Caco-2 (cell line): ENCODE measurements at regions of chr7 and their contacts with region 1.

Region 1: DNA sequence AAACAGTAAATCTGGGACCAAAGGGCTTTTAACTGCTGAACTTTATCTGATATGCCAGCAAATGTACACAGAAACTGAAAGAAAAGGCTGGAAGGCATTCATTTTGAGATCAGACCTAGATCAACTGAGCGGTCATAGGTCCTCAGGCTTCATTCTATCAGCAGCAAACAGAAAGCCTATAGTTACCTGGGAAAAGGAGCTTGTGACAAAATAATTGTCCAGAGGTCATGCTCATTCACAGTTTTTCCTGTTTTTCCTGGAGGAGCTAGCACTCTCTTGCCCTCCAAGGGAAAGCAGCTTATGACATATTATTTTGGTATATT is 320.2 kb downstream of the AHR start:
- DNase-seq: peak; percentile 66 to 80
- H3K4me3 ChIP-seq: peak overlapping the region; percentile 9; the same call in 1 of the 2 replicates
- H3K4me3 Mint-ChIP-seq: peak overlapping the region; percentile 67
- H3K27ac Mint-ChIP-seq: peak overlapping the region; percentile 83
- H3K4me1 ChIP-seq: peaks cover 35% of the 10 kb centered on the region
- H3K4me1 Mint-ChIP-seq: peaks cover 19% of the 10 kb centered on the region
- H3K27me3 ChIP-seq: no peaks in the 10 kb centered on the region
- H3K27me3 Mint-ChIP-seq: no peaks in the 10 kb centered on the region
- CTCF ChIP-seq: no peak

Region 2: GRCh38 chr7:17495655-17496394 is 122.8 kb before region 1 on chr7:
- CTCF ChIA-PET with region 1: no interaction called
- POLR2A ChIA-PET with region 1: no interaction called
- intact Hi-C with region 1: loop called (anchors 5 kb)
- DNase-seq: peak in 1 of 2 experiments; percentile 26
- H3K4me3 ChIP-seq: no peak overlapping the region
- H3K4me3 Mint-ChIP-seq: no peak overlapping the region
- H3K27ac Mint-ChIP-seq: peak overlapping the region; percentile 22
- H3K4me1 ChIP-seq: peaks cover 24% of the 10 kb centered on the region
- H3K4me1 Mint-ChIP-seq: peaks cover 11% of the 10 kb centered on the region
- H3K27me3 ChIP-seq: no peaks in the 10 kb centered on the region
- H3K27me3 Mint-ChIP-seq: no peaks in the 10 kb centered on the region
- CTCF ChIP-seq: peak in 1 of 2 experiments; percentile 0

Region 3: DNA sequence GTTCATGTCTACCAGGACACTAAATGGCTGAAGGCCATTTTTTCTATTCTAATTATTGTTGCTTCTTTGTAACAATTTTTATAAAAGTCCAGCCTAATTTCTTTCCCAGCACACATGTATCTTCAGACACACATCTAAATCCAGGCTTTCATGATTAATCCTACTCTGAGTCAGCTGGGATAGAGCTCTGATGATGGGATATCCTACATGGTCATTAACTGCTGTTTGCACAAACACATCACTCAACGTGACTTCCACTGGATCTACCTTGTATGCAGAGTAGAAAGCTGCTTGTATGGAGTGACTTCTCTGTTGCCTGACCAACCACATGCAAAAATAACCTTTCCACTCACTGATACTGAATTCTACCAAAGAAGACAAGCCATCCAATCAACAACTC is 59.2 kb before region 1 on chr7:
- CTCF ChIA-PET with region 1: no interaction called
- POLR2A ChIA-PET with region 1: no interaction called
- intact Hi-C with region 1: loop called (anchors 2 kb)
- DNase-seq: no peak
- H3K4me3 ChIP-seq: no peak overlapping the region
- H3K4me3 Mint-ChIP-seq: peak overlapping the region; percentile 6
- H3K27ac Mint-ChIP-seq: peak overlapping the region; percentile 67
- H3K4me1 ChIP-seq: peaks cover 23% of the 10 kb centered on the region
- H3K4me1 Mint-ChIP-seq: peaks cover 24% of the 10 kb centered on the region
- H3K27me3 ChIP-seq: no peaks in the 10 kb centered on the region
- H3K27me3 Mint-ChIP-seq: no peaks in the 10 kb centered on the region
- CTCF ChIP-seq: no peak

Region 4: DNA sequence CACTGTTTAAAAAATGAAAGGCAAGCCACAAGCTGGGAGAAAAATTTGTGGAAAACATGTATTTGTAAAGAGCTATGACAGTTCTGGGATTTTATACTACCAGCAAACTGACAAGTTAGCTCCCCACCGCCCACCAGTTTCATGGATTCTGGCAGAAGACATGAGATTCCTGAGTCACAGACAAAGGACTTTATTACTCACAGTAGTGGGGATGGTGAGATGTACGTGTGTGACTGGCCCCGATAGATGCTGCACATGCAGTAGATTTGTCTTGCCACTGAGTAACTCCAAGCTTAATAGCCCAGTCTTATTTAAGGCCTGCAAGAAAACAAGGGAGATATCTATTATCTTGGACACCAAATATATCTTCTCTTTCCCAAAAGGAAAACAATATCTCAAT is 38.5 kb before region 1 on chr7:
- CTCF ChIA-PET with region 1: no interaction called
- POLR2A ChIA-PET with region 1: no interaction called
- intact Hi-C with region 1: loop called (anchors 2 kb)
- DNase-seq: no peak
- H3K4me3 ChIP-seq: no peak overlapping the region
- H3K4me3 Mint-ChIP-seq: no peak overlapping the region
- H3K27ac Mint-ChIP-seq: no peak overlapping the region
- H3K4me1 ChIP-seq: no peaks in the 10 kb centered on the region
- H3K4me1 Mint-ChIP-seq: no peaks in the 10 kb centered on the region
- H3K27me3 ChIP-seq: no peaks in the 10 kb centered on the region
- H3K27me3 Mint-ChIP-seq: no peaks in the 10 kb centered on the region
- CTCF ChIP-seq: no peak

Region 5: GRCh38 chr7:17633099-17633498 is 14.5 kb after region 1 on chr7:
- CTCF ChIA-PET with region 1: interaction called, 3 read pairs
- POLR2A ChIA-PET with region 1: no interaction called
- intact Hi-C with region 1: loop called (anchors 1 kb)
- DNase-seq: peak in 1 of 2 experiments; percentile 42
- H3K4me3 ChIP-seq: no peak overlapping the region
- H3K4me3 Mint-ChIP-seq: no peak overlapping the region
- H3K27ac Mint-ChIP-seq: no peak overlapping the region
- H3K4me1 ChIP-seq: peaks cover 40% of the 10 kb centered on the region
- H3K4me1 Mint-ChIP-seq: peaks cover 35% of the 10 kb centered on the region
- H3K27me3 ChIP-seq: no peaks in the 10 kb centered on the region
- H3K27me3 Mint-ChIP-seq: no peaks in the 10 kb centered on the region
- CTCF ChIP-seq: no peak

Region 6: DNA sequence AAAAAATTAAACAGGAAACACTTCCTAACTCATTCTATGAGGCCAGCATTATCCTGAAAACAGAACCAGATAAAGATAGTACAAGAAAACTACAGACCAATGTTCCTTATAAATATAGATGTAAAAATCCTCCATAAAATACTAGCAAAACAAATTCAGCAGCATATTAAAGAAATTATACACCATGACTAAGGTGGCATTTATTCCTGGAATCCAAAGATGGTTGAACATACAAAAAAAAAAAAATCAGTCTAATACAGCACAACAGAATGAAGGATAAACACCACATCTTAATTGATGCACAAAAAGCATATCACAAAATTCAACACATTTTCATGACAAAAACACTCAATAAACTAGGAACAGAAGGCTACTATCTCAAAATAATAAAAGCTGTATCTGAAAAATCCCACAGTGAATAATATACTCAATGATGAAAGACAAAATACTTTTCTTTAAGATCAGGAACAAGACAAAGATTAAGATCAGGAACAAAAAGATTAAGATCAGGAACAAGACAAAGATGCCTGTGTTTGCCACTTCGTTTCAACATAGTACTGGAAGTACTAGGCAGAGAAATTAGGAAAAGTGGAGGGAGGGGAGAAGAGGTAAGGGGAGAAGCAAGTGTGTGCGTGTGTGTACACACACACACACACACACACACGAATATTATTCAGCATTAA is 226.0 kb after region 1 on chr7:
- CTCF ChIA-PET with region 1: no interaction called
- POLR2A ChIA-PET with region 1: no interaction called
- intact Hi-C with region 1: no loop called
- DNase-seq: no peak
- H3K4me3 ChIP-seq: no peak overlapping the region
- H3K4me3 Mint-ChIP-seq: no peak overlapping the region
- H3K27ac Mint-ChIP-seq: no peak overlapping the region
- H3K4me1 ChIP-seq: no peaks in the 10 kb centered on the region
- H3K4me1 Mint-ChIP-seq: peaks cover 17% of the 10 kb centered on the region
- H3K27me3 ChIP-seq: no peaks in the 10 kb centered on the region
- H3K27me3 Mint-ChIP-seq: no peaks in the 10 kb centered on the region
- CTCF ChIP-seq: no peak